GM12878 (cell line): ENCODE measurements at regions of chr17 and their contacts with region 1.

Region 1: DNA sequence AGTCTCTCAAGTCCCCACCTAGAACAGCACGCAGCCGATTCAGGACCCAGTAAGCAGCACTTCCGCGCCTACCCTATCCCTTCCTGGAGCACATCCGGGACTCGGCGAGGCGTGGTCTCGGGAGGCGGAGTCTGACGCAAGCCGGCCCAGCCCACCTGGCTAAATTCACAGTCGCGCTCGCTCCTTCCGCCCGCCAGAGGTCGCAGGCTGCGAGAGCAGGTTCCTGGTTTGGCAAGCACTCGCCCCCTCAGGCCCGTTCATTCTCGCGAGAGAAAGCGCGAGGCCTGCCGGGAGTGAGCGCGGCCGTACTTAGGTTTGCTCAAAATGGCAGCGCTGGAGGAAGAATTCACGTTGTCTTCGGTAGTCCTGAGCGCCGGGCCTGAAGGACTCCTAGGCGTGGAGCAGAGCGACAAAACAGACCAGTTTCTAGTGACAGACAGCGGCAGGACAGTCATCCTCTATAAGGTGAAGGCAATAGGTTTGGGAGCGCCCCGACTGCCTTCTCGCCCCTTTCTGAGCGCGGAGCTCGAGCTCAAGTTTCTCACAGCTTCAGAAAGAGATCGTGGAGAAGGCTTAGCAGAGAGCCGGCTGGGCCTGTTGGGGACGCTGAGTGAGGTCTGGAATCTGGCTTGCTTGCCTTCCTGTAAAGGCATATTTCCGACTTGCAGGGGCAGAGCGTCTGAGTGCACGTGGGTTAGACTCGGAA is at the start of gene NOL11:
- DNase-seq: peak; percentile 97
- ATAC-seq: peak; percentile 95
- H3K4me3 ChIP-seq: peak within 1 kb of the TSS; percentile 95
- H3K27ac ChIP-seq: peak within 1 kb of the TSS; percentile 91
- H3K4me1 ChIP-seq: peaks cover 6% of the 10 kb centered on the region
- H3K27me3 ChIP-seq: no peaks in the 10 kb centered on the region
- CTCF ChIP-seq: peak; percentile 94 to 99 (median 96); a peak in 5 of 6 replicates
- EP300 ChIP-seq: no peak
- POLR2A ChIP-seq: peak; percentile 91
- RAD21 ChIP-seq: peak; percentile 56
- polyA plus RNA-seq, gene NOL11: 92.6 to 130 TPM

Region 2: DNA sequence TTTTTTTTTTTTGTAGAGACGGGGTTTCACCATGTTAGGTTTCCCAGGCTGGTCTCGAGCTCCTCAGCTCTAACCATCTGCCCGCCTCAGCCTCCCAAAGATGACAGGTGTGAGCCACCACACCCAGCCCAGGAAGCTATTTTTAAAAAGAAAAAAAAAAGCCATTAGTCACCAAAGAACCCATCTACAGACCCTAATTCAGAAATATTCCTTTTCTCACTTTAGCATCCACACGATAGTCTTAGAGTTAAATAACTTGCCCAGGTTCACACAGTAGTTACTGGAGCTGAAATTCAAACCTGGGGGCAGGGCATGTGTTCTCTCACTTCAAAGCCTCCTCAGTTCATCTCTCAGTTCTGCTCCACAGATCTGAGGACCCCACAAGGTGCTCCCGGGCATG is 70.3 kb before region 1 on chr17:
- CTCF ChIA-PET with region 1: interaction called, 4 read pairs
- POLR2A ChIA-PET with region 1: interaction called, 7 read pairs
- RAD21 ChIA-PET with region 1: interaction called, 5 read pairs
- SMC1A ChIA-PET with region 1: interaction called, 10 read pairs
- in situ Hi-C with region 1: no loop called
- intact Hi-C with region 1: loop called (anchors 2 kb)
- DNase-seq: peak; percentile 67
- ATAC-seq: peak; percentile 59
- H3K4me3 ChIP-seq: no peak overlapping the region
- H3K27ac ChIP-seq: peak overlapping the region; percentile 92
- H3K4me1 ChIP-seq: peaks cover 60% of the 10 kb centered on the region
- H3K27me3 ChIP-seq: no peaks in the 10 kb centered on the region
- CTCF ChIP-seq: no peak
- EP300 ChIP-seq: peak in 1 of 2 experiments; percentile 78; a peak in 2 of 4 replicates
- POLR2A ChIP-seq: no peak
- RAD21 ChIP-seq: peak; percentile 34; the same call in 1 of the 2 replicates

Region 3: GRCh38 chr17:67707442-67707841 is 10.3 kb before region 1 on chr17:
- CTCF ChIA-PET with region 1: interaction called, 4 read pairs
- POLR2A ChIA-PET with region 1: interaction called, 3 read pairs
- RAD21 ChIA-PET with region 1: no interaction called
- SMC1A ChIA-PET with region 1: interaction called, 12 read pairs
- in situ Hi-C with region 1: no loop called
- intact Hi-C with region 1: no loop called
- DNase-seq: no peak
- ATAC-seq: no peak
- H3K4me3 ChIP-seq: no peak overlapping the region
- H3K27ac ChIP-seq: no peak overlapping the region
- H3K4me1 ChIP-seq: no peaks in the 10 kb centered on the region
- H3K27me3 ChIP-seq: no peaks in the 10 kb centered on the region
- CTCF ChIP-seq: no peak
- EP300 ChIP-seq: no peak
- POLR2A ChIP-seq: no peak
- RAD21 ChIP-seq: no peak

Region 4: DNA sequence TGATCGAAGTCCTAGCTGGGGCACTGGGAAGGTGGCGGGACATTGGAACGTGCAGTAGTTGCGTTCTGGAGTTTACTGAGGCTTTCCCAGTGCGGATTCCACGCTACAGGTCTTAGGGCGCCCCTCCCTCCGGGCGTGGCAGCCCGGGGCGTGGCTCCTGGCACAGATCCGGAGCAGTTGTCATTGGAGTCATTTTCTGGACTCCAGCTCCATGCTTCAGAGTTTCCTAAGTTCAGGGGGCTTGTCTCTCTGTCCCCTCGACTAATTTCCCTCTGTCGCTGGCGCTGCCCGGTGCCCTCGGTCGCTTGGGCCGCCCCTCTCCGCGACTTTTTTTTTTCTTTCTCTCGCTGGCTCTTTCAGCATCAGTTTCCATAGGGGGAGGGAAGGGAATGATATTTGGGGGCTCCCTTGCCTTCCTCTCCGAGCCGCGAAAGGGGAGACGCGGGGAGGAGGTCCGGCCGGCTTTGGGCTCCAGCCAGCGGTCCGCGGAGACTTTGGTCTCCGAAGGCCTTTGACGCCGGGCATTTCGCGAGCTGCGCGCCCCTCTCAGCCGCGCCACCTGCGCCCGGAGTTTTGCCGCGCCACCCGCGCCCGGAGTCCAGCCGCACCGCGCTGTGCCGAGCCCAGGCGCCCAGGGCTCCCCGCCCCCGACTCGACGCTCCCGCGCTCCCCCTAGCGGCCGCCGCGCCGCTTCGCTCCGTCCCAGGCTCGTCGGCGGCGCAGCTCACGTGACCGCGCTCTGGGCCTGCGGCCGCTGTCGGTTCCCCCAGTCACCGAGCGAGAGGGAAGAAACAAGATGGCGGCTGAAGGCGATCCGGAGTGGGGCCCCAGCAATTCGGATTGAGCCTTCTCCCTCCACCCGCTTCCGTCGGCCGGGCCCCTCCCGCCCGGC is 107.2 kb after region 1 on chr17 and contains the start of gene BPTF:
- CTCF ChIA-PET with region 1: interaction called, 3 read pairs
- POLR2A ChIA-PET with region 1: interaction called, 8 read pairs
- RAD21 ChIA-PET with region 1: no interaction called
- SMC1A ChIA-PET with region 1: no interaction called
- in situ Hi-C with region 1: no loop called
- intact Hi-C with region 1: loop called (anchors 5 kb)
- DNase-seq: peak; percentile 72
- ATAC-seq: peak; percentile 88
- H3K4me3 ChIP-seq: peak within 1 kb of the TSS; percentile 89
- H3K27ac ChIP-seq: peak within 1 kb of the TSS; percentile 83
- H3K4me1 ChIP-seq: peaks cover 27% of the 10 kb centered on the region
- H3K27me3 ChIP-seq: no peaks in the 10 kb centered on the region
- CTCF ChIP-seq: peak; percentile 79 to 97 (median 93); a peak in 4 of 6 replicates
- EP300 ChIP-seq: peak in 1 of 2 experiments; percentile 27; a peak in 1 of 4 replicates
- POLR2A ChIP-seq: peak; percentile 89
- RAD21 ChIP-seq: peak; percentile 73
- polyA plus RNA-seq, gene BPTF: 32.9 to 39.7 TPM